Mammary epithelial cell (primary cell): ENCODE measurements at regions of chr4 and their contacts with region 1.

Region 1: GRCh38 chr4:90002441-90003077 is 107.9 kb downstream of the MMRN1 start:
- DNase-seq: no peak
- H3K4me3 ChIP-seq: no peak overlapping the region
- H3K27ac ChIP-seq: no peak overlapping the region
- H3K4me1 ChIP-seq: no peaks in the 10 kb centered on the region
- H3K27me3 ChIP-seq: peaks cover 2% of the 10 kb centered on the region
- CTCF ChIP-seq: no peak

Region 2: GRCh38 chr4:88759039-88759894 is 1243.3 kb before region 1 on chr4:
- CTCF ChIA-PET with region 1: no interaction called
- dilution Hi-C with region 1: no loop called
- in situ Hi-C with region 1: no loop called
- intact Hi-C with region 1: no loop called
- DNase-seq: no peak
- H3K4me3 ChIP-seq: no peak overlapping the region
- H3K27ac ChIP-seq: no peak overlapping the region
- H3K4me1 ChIP-seq: no peaks in the 10 kb centered on the region
- H3K27me3 ChIP-seq: no peaks in the 10 kb centered on the region
- CTCF ChIP-seq: no peak

Region 3: DNA sequence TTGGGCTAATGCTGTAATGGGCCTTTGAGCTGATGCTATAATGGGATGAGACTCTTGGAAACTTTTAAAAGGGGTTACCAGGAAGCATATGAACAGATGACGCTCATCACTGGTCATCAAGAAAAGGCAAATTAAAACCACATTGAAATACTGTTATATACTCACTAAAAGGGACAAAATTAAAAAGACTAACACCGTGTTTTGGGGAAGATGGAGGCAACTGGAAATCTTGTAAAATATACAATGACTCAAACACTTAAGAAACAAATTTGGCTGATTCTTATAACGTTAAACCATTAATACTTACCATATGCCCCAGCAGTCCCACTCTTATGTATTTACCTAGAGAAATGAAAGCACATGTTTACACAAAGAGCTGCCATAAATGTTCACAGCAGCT is 487.7 kb before region 1 on chr4:
- CTCF ChIA-PET with region 1: no interaction called
- dilution Hi-C with region 1: no loop called
- in situ Hi-C with region 1: no loop called
- intact Hi-C with region 1: no loop called
- DNase-seq: no peak
- H3K4me3 ChIP-seq: no peak overlapping the region
- H3K27ac ChIP-seq: no peak overlapping the region
- H3K4me1 ChIP-seq: peaks cover 3% of the 10 kb centered on the region
- H3K27me3 ChIP-seq: no peaks in the 10 kb centered on the region
- CTCF ChIP-seq: no peak

Region 4: GRCh38 chr4:89929425-89930159 is 73.0 kb before region 1 on chr4:
- CTCF ChIA-PET with region 1: no interaction called
- dilution Hi-C with region 1: loop called (anchors 5 kb)
- in situ Hi-C with region 1: no loop called
- intact Hi-C with region 1: no loop called
- DNase-seq: no peak
- H3K4me3 ChIP-seq: no peak overlapping the region
- H3K27ac ChIP-seq: no peak overlapping the region
- H3K4me1 ChIP-seq: no peaks in the 10 kb centered on the region
- H3K27me3 ChIP-seq: peaks cover 2% of the 10 kb centered on the region
- CTCF ChIP-seq: no peak

Region 5: GRCh38 chr4:90061881-90062280 is 59.3 kb after region 1 on chr4:
- CTCF ChIA-PET with region 1: no interaction called
- dilution Hi-C with region 1: no loop called
- in situ Hi-C with region 1: no loop called
- intact Hi-C with region 1: no loop called
- DNase-seq: no peak
- H3K4me3 ChIP-seq: no peak overlapping the region
- H3K27ac ChIP-seq: no peak overlapping the region
- H3K4me1 ChIP-seq: no peaks in the 10 kb centered on the region
- H3K27me3 ChIP-seq: no peaks in the 10 kb centered on the region
- CTCF ChIP-seq: no peak